ENCODE measurements at regions of chr1 and their contacts with region 1.

Region 1: GRCh38 chr1:52662645-52663313 is 29.8 kb downstream of the SHISAL2A start:
- DNase-seq: no peak
- ATAC-seq: no peak
- H3K4me3 ChIP-seq: no peak overlapping the region
- H3K4me3 Mint-ChIP-seq: no peak overlapping the region
- H3K27ac ChIP-seq: no peak overlapping the region
- H3K27ac Mint-ChIP-seq: peak overlapping the region; percentile 48
- H3K4me1 ChIP-seq: peaks cover 4% of the 10 kb centered on the region
- H3K4me1 Mint-ChIP-seq: peaks cover 4% of the 10 kb centered on the region
- H3K27me3 ChIP-seq: no peaks in the 10 kb centered on the region
- H3K27me3 Mint-ChIP-seq: no peaks in the 10 kb centered on the region
- CTCF ChIP-seq: no peak

Region 2: DNA sequence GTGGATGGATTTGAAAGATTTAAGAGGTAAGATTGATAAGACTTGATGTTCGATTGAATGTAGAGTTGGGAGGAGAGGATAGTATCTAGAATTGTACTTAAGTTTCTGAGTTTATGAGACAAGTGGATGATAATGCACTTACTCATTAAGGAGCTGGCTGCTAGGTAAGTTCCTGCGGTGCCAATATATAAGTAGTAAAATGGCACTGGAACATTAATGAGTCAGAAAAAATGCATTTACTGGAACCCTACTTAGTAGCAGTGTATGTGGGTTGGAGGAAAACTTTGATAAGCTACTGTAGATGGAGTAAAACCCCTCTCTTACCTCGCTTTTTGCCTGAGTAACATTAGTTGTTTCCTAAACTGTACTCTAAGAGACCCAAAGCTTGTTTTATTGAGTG is 452.7 kb before region 1 on chr1:
- CTCF ChIA-PET with region 1: no interaction called
- POLR2A ChIA-PET with region 1: no interaction called
- intact Hi-C with region 1: no loop called
- DNase-seq: no peak
- ATAC-seq: no peak
- H3K4me3 ChIP-seq: no peak overlapping the region
- H3K4me3 Mint-ChIP-seq: no peak overlapping the region
- H3K27ac ChIP-seq: no peak overlapping the region
- H3K27ac Mint-ChIP-seq: no peak overlapping the region
- H3K4me1 ChIP-seq: no peaks in the 10 kb centered on the region
- H3K4me1 Mint-ChIP-seq: no peaks in the 10 kb centered on the region
- H3K27me3 ChIP-seq: no peaks in the 10 kb centered on the region
- H3K27me3 Mint-ChIP-seq: no peaks in the 10 kb centered on the region
- CTCF ChIP-seq: no peak

Region 3: GRCh38 chr1:52487632-52488031 is 175.1 kb before region 1 on chr1:
- CTCF ChIA-PET with region 1: no interaction called
- POLR2A ChIA-PET with region 1: no interaction called
- intact Hi-C with region 1: loop called in 1 of 2 experiments (anchors 5 kb)
- DNase-seq: no peak
- ATAC-seq: no peak
- H3K4me3 ChIP-seq: no peak overlapping the region
- H3K4me3 Mint-ChIP-seq: no peak overlapping the region
- H3K27ac ChIP-seq: no peak overlapping the region
- H3K27ac Mint-ChIP-seq: no peak overlapping the region
- H3K4me1 ChIP-seq: no peaks in the 10 kb centered on the region
- H3K4me1 Mint-ChIP-seq: peaks cover 3% of the 10 kb centered on the region
- H3K27me3 ChIP-seq: no peaks in the 10 kb centered on the region
- H3K27me3 Mint-ChIP-seq: no peaks in the 10 kb centered on the region
- CTCF ChIP-seq: no peak

Measured in CD4-positive, alpha-beta T cell (primary cell).